ENCODE measurements at regions of chr21 and their contacts with region 1.

Region 1: DNA sequence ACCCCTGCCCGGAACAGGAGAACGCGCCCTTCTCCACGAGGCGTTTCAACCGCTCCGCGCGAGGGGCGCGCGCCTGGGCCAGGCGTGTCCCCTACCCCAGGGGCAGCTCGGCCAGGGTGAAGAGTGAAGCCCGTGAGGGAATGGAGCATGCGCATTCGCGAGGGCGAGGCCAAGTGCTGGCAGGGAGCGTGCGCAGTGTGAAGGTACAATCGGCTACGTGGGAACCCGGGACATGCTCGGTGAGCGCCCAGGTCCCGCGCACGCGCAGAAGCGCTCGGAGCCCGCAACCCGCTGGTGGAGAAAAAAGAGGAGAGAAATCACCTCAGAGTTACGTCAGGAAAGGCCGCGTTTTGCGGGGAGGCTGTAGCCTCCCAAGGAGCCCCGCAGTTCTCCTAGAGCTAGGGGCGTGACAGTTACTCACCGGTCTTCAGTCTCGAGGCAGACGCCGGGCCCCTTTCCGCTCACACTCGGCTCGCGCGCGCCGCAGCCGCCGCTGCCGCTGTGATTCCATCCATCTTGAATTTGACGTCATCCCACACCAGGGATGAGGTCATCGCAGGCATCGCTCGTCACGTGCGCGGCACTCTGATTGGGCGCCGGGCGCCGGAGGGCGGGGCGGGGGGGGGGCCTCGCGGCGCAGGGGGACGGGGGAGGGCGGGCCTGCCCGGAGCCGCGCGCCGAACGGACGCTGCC is at the start of gene ZBTB21:
- DNase-seq: peak; percentile 96 to 99 (median 98)
- ATAC-seq: peak; percentile 76 to 82
- H3K4me3 Mint-ChIP-seq: peak within 1 kb of the TSS; percentile 81 to 100 (median 98)
- H3K27ac Mint-ChIP-seq: peak within 1 kb of the TSS; percentile 94 to 100 (median 100)
- H3K4me1 Mint-ChIP-seq: peaks cover 28 to 40% (median 37%) of the 10 kb centered on the region in 4 donors
- H3K27me3 Mint-ChIP-seq: peaks cover 0 to 4% (median 0%) of the 10 kb centered on the region in 5 donors
- polyA plus RNA-seq, gene ZBTB21: 4.2 to 6.3 (median 4.7) TPM

Region 2: GRCh38 chr21:42107881-42108553 is 98.0 kb after region 1 on chr21:
- POLR2A ChIA-PET with region 1: interaction called, 43 read pairs
- DNase-seq: peak; percentile 37 to 81 (median 64)
- ATAC-seq: peak; percentile 98 to 99
- H3K4me3 Mint-ChIP-seq: peak overlapping the region; percentile 58 to 82 (median 72)
- H3K27ac Mint-ChIP-seq: peak overlapping the region in 9 of 10 donors; percentile 23 to 89 (median 79)
- H3K4me1 Mint-ChIP-seq: peaks cover 7 to 15% (median 12%) of the 10 kb centered on the region in 4 donors
- H3K27me3 Mint-ChIP-seq: peaks cover 0 to 5% (median 0%) of the 10 kb centered on the region in 5 donors

Region 3: DNA sequence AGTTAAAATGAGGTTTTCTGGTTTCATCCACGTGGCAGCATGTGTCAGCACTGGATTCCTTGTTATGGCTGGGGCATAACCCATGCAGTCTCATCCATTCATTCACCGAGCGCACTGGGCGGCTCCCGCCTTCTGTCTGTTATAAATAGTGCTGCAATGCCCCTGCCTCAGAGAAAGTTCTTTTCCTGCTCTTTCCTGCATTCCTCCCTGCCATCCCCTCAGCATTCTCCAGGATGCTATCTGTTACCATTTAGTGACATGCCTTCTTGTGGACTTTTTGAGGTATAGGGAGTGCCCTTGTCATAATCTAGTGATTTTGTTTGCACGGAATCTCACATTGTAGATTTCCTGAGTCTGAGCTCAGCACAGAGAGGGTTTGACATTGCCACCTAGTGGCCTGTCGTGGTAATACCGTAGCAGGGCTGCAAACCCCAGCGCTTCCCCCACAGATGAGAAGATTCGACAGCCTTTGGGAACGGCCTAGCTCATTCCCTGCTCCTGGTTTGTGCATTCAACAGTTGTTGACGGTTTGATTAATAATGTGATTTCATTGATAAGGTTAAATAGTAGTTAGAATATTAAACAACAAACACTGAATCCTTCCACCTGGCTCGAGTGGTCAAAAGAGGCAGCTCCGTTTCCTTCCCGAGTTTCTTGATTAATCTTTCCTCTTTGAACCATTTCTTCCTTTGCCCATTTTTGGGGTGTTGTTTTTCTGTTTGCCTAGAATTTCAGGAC is 107.4 kb after region 1 on chr21:
- POLR2A ChIA-PET with region 1: interaction called, 12 read pairs
- DNase-seq: peak; percentile 53 to 85 (median 73)
- ATAC-seq: peak; percentile 85 to 89
- H3K4me3 Mint-ChIP-seq: peak overlapping the region in 8 of 10 donors; percentile 34 to 79 (median 59)
- H3K27ac Mint-ChIP-seq: peak overlapping the region in 2 of 10 donors; percentile 23 to 24
- H3K4me1 Mint-ChIP-seq: peaks cover 17 to 43% (median 38%) of the 10 kb centered on the region in 4 donors
- H3K27me3 Mint-ChIP-seq: peaks cover 21 to 63% (median 43%) of the 10 kb centered on the region in 5 donors

Measured in naive thymus-derived CD8-positive, alpha-beta T cell (primary cell).